Natural killer cell (primary cell): ENCODE measurements at regions of chr21 and their contacts with region 1.

Region 1: DNA sequence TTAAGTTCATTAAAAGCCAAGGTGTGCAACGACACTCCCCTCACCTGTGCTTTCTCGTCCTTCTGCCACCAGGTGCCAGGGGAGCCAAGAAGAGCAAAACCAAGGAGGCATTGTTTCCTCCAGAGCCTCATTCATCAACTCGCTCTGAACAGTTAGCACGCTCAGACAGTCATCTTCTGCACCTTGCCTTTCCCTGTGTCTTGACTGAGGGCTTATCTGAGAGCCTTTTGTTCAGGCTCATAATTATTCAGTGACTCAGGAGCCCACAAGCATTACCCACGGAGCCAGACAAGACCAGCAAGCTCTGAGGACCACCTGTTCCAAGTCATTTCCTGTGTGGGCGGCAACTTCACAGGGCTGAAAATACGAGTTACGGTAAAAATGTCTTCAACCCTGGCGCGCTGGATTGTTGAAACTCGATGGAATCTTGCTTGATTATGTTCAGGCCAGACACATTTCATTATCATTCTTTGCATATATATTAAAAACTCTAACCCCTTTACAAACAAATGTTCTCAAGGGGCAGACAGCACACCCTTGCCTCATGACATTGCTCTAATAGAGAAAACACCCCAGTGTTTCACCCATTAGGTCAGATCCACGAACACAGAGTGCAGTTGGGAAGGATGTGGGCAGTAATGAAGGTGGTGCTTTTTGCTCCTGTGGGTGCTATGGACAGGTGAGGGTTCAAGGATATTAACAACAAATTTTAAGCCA is 89.7 kb upstream of the RUNX1 start:
- DNase-seq: peak; percentile 19 to 53
- ATAC-seq: peak; percentile 58 to 92 (median 88)
- H3K4me3 ChIP-seq: no peak overlapping the region
- H3K4me3 Mint-ChIP-seq: peak overlapping the region; percentile 31
- H3K27ac ChIP-seq: no peak overlapping the region
- H3K27ac Mint-ChIP-seq: peak overlapping the region in 1 of 2 donors; percentile 38
- H3K4me1 ChIP-seq: peaks cover 10% of the 10 kb centered on the region
- H3K4me1 Mint-ChIP-seq: peaks cover 16 to 17% of the 10 kb centered on the region in 2 donors
- H3K27me3 ChIP-seq: no peaks in the 10 kb centered on the region
- H3K27me3 Mint-ChIP-seq: no peaks in the 10 kb centered on the region
- CTCF ChIP-seq: no peak

Region 2: DNA sequence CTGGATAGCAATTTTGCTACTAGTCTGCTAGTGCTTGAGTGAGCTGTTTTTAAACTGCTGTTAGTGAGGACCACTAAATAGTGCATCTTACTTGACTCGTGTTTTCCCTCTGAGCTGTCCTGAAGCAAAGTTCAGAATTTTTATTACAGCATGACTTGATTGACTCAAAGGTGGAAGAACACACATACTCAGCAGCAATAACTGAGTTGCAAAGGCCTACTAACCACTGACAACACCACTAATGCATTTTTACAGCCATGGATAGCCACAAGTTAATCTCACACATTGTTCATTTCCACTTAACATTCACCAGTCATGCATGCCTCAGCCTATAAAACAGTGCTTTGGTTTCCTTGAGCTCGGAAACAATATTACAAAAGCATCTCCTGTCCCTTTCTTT is 238.4 kb before region 1 on chr21:
- intact Hi-C with region 1: loop called (anchors 5 kb)
- DNase-seq: no peak
- ATAC-seq: no peak
- H3K4me3 ChIP-seq: no peak overlapping the region
- H3K4me3 Mint-ChIP-seq: no peak overlapping the region
- H3K27ac ChIP-seq: no peak overlapping the region
- H3K27ac Mint-ChIP-seq: no peak overlapping the region
- H3K4me1 ChIP-seq: no peaks in the 10 kb centered on the region
- H3K4me1 Mint-ChIP-seq: peaks cover 28 to 42% of the 10 kb centered on the region in 2 donors
- H3K27me3 ChIP-seq: no peaks in the 10 kb centered on the region
- H3K27me3 Mint-ChIP-seq: no peaks in the 10 kb centered on the region
- CTCF ChIP-seq: no peak

Region 3: DNA sequence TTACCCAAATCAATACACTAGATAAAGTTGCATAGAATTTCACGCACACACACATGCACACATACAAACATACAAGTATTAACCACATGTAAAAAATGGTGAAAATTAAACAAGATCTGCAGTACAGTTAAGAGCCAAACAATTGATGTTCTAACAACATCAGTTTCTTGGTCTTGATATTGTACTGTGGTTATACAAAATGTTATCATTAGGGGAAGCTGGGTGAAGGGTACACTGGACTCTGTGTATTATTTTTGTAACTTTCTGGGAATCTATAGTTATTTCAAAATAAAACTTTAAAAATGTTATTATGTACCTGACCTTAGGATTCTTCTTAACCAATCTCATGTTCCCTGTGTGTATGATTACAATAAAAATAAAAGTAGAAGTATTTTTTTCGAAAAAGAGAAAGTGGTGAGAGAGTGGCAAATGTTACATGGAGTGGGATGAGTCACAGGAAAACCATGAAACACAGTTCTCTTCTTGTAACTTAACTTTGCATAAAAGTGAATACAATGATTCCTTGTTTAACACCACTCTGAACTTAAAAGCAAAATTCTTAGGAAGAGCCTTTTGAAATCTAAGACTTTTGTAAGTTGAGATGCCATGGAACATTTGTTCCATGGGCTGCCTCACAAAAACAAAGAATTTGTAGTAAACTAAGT is 11.9 kb after region 1 on chr21:
- intact Hi-C with region 1: no loop called
- DNase-seq: no peak
- ATAC-seq: no peak
- H3K4me3 ChIP-seq: no peak overlapping the region
- H3K4me3 Mint-ChIP-seq: no peak overlapping the region
- H3K27ac ChIP-seq: no peak overlapping the region
- H3K27ac Mint-ChIP-seq: no peak overlapping the region
- H3K4me1 ChIP-seq: no peaks in the 10 kb centered on the region
- H3K4me1 Mint-ChIP-seq: peaks cover 6% of the 10 kb centered on the region in 2 donors
- H3K27me3 ChIP-seq: no peaks in the 10 kb centered on the region
- H3K27me3 Mint-ChIP-seq: no peaks in the 10 kb centered on the region
- CTCF ChIP-seq: no peak